Activated CD4-positive, alpha-beta T cell treated with anti-CD3 and anti-CD28 coated beads for 36 hours (primary cell): ENCODE measurements at regions of chr12 and their contacts with region 1.

Region 1: DNA sequence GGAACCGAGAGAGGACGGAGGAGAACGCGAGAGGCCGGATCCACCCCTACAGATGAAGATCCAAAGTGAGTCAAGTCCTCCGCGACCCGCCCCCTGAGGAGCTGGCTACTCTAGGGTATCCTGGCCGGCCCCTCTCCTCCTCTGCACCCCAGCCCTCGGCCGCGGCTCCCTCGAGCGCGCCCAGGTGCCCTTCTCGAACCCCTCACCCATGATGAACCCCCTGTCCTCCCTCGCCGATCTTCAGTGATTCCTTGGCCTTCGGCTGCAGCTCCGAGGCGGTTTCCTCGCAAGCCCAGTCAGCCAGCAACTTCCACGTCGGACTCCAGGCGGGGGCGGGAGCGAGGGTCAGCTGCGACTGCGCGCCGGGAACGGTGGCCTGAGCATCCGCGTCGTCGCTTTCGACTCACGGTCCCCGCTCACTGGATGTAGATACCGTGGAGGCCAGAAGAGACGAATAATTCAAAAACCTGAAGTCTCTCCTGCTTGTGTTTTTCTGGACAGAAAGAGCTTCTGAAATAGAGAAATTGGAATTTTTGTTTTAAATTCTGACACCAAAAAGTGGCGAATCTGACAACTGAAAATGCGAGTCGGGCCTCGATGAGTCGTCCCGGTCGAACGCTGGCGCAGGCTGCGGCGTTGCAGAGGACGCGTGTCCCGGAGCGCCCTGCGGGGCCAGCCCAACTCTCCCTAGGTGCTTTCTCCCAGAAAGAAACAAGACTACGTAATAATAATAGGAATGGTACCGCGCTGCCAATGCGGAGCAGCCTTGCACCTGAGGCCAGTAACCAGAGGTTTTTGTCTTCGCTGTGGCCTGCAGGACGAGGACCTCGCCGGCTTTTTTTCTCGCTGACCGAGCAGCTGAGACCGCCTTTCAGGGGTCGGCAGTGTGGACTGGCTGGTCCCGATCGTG is at the start of gene ARL1:
- DNase-seq: peak; percentile 91
- ATAC-seq: peak; percentile 83
- H3K4me3 Mint-ChIP-seq: peak within 1 kb of the TSS; percentile 95
- H3K27ac Mint-ChIP-seq: peak within 1 kb of the TSS; percentile 95
- H3K4me1 Mint-ChIP-seq: peaks cover 15% of the 10 kb centered on the region
- H3K27me3 Mint-ChIP-seq: no peaks in the 10 kb centered on the region
- total RNA-seq, gene ARL1: 67.2 to 85.6 TPM

Region 2: GRCh38 chr12:101280006-101280505 is 127.6 kb before region 1 on chr12 and contains the start of gene UTP20:
- CTCF ChIA-PET with region 1: interaction called, 5 read pairs
- POLR2A ChIA-PET with region 1: no interaction called
- intact Hi-C with region 1: loop called in 1 of 2 experiments (anchors 1 kb)
- DNase-seq: peak; percentile 97
- ATAC-seq: peak; percentile 100
- H3K4me3 Mint-ChIP-seq: peak within 1 kb of the TSS; percentile 93
- H3K27ac Mint-ChIP-seq: peak within 1 kb of the TSS; percentile 85
- H3K4me1 Mint-ChIP-seq: peaks cover 17% of the 10 kb centered on the region
- H3K27me3 Mint-ChIP-seq: peaks cover 9% of the 10 kb centered on the region
- total RNA-seq, gene UTP20: 29.4 to 33.1 TPM

Region 3: GRCh38 chr12:101356794-101357193 is 50.9 kb before region 1 on chr12:
- CTCF ChIA-PET with region 1: no interaction called
- POLR2A ChIA-PET with region 1: no interaction called
- intact Hi-C with region 1: no loop called
- DNase-seq: no peak
- ATAC-seq: no peak
- H3K4me3 Mint-ChIP-seq: no peak overlapping the region
- H3K27ac Mint-ChIP-seq: no peak overlapping the region
- H3K4me1 Mint-ChIP-seq: no peaks in the 10 kb centered on the region
- H3K27me3 Mint-ChIP-seq: no peaks in the 10 kb centered on the region

Region 4: DNA sequence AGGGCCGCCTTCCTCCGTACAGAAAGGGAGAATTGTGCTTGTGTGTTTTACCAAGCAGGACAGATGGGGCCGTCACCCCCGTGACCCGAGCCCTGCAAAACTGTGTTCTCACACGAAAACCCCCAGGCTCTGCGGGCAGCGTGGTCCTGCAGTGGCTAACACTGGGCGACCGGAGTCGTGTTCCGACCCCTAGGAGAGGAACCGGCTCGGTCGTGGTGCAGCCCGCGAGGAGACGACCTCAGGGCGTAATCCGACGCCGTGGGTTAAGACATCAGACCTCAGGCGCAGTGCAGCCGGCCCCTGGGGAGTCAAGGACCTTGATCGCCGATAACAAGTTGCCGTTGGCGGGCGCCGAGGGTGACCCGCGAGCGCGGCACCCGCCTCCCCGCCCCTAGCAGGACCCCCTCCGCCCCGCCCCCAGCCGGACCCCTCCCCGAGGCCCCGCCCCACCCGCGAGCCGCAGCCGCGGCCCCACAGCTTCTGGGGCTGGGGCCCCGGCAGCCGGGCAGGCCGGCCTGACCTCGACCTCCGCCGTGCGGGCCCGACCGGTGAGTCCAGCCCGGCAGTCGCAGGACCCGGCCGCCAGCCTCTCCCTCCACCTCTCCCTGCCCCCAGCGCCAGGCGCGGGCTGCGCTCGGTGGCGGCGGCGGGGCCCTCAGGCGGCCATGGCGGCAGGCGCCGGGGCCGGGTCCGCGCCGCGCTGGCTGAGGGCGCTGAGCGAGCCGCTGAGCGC is 289.7 kb after region 1 on chr12 and contains the start of gene CHPT1:
- CTCF ChIA-PET with region 1: no interaction called
- POLR2A ChIA-PET with region 1: no interaction called
- intact Hi-C with region 1: loop called in 1 of 2 experiments (anchors 1 kb)
- DNase-seq: peak; percentile 76
- ATAC-seq: peak; percentile 74
- H3K4me3 Mint-ChIP-seq: peak within 1 kb of the TSS; percentile 81
- H3K27ac Mint-ChIP-seq: peak within 1 kb of the TSS; percentile 83
- H3K4me1 Mint-ChIP-seq: peaks cover 29% of the 10 kb centered on the region
- H3K27me3 Mint-ChIP-seq: no peaks in the 10 kb centered on the region
- total RNA-seq, gene CHPT1: 12.2 to 15.2 TPM

Region 5: DNA sequence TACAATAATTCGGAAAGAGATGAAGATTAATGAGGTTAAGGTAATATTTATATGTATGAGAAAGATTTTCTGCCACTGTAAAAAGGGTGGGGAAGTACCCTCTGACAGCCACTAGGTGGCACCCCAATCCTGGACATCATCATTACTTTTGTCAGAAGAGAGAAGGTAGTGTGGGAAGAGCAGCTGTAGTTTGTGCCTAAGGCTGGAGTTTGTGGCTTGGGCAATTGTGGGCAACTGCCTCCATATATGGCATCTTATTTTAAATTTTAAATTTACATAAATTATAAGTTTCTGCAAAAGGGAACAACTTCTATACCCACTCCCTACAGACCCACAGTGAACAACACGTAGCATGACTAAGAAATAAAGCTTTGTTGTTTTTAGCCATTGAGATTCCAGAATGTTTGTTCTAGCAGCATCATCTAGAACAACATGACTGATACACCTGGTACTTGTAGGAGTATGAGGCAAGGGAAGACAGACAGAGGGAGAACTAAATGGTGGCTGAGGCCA is 366.0 kb after region 1 on chr12:
- CTCF ChIA-PET with region 1: no interaction called
- POLR2A ChIA-PET with region 1: no interaction called
- intact Hi-C with region 1: loop called in 1 of 2 experiments (anchors 5 kb)
- DNase-seq: peak; percentile 78
- ATAC-seq: peak; percentile 87
- H3K4me3 Mint-ChIP-seq: no peak overlapping the region
- H3K27ac Mint-ChIP-seq: peak overlapping the region; percentile 65
- H3K4me1 Mint-ChIP-seq: peaks cover 9% of the 10 kb centered on the region
- H3K27me3 Mint-ChIP-seq: no peaks in the 10 kb centered on the region

Region 6: GRCh38 chr12:101819467-101819866 is 411.8 kb after region 1 on chr12:
- CTCF ChIA-PET with region 1: no interaction called
- POLR2A ChIA-PET with region 1: no interaction called
- intact Hi-C with region 1: no loop called
- DNase-seq: no peak
- ATAC-seq: peak; percentile 73
- H3K4me3 Mint-ChIP-seq: peak overlapping the region; percentile 20
- H3K27ac Mint-ChIP-seq: peak overlapping the region; percentile 80
- H3K4me1 Mint-ChIP-seq: peaks cover 60% of the 10 kb centered on the region
- H3K27me3 Mint-ChIP-seq: no peaks in the 10 kb centered on the region

Region 7: DNA sequence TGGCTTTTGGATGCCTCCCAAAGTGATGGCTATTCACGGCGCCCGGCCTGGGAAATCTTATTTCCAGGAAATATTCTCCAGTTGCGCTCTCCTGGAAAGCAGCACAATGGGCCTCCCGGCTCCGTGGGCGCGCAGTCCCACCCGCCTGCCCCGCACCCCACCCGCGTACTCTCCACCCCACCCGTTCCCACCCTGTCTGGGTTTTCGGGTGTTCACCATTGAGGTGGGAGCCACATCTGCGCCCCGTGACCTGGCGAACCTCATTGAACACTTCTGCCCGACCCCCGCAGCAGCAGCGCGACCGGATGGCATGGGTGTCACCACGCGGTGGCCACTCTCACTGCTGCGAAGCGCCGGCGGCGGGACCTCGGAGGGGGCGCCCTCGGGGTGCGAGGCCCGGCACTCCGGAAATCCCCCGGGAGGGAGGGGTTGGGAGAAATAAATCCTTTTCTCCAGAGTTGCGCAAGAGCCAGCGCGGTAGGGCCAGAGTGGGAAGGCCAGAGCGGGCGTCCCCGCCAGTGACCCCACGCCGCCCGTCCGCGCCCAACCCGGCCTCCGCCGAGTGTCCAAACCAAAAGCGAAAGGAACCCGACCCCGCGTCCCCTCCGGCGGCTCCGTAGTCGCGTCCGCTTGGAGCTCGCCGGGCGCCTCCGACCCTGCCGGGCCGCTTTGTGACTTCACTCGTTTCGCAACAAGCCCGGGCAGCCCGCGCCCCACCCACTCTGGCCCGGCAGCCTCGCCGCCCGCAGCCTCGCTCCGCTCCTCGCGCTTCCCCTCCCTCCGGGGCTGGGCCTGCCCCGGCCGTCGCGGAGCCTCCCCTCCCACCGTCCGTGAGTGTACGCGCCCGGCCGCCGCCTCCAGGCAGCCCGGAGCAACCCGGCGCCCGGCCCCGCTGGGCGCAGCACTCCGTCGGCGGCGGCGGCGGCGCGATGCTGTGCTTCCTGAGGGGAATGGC is 469.4 kb after region 1 on chr12 and contains the start of gene DRAM1:
- CTCF ChIA-PET with region 1: no interaction called
- POLR2A ChIA-PET with region 1: no interaction called
- intact Hi-C with region 1: loop called in 1 of 2 experiments (anchors 1 kb)
- DNase-seq: peak; percentile 85
- ATAC-seq: peak; percentile 91
- H3K4me3 Mint-ChIP-seq: peak within 1 kb of the TSS; percentile 75
- H3K27ac Mint-ChIP-seq: peak within 1 kb of the TSS; percentile 59
- H3K4me1 Mint-ChIP-seq: peaks cover 6% of the 10 kb centered on the region
- H3K27me3 Mint-ChIP-seq: peaks cover 3% of the 10 kb centered on the region
- total RNA-seq, gene DRAM1: 2.3 to 2.4 TPM

Region 8: GRCh38 chr12:102061560-102062418 is 654.1 kb after region 1 on chr12 and contains the start of gene WASHC3:
- CTCF ChIA-PET with region 1: no interaction called
- POLR2A ChIA-PET with region 1: no interaction called
- intact Hi-C with region 1: loop called in 1 of 2 experiments (anchors 5 kb)
- DNase-seq: peak; percentile 98
- ATAC-seq: peak; percentile 93
- H3K4me3 Mint-ChIP-seq: peak within 1 kb of the TSS; percentile 94
- H3K27ac Mint-ChIP-seq: peak within 1 kb of the TSS; percentile 99
- H3K4me1 Mint-ChIP-seq: peaks cover 29% of the 10 kb centered on the region
- H3K27me3 Mint-ChIP-seq: no peaks in the 10 kb centered on the region
- total RNA-seq, gene WASHC3: 36.1 to 64.4 TPM